CD14-positive monocyte (primary cell): ENCODE measurements at regions of chr15 and their contacts with region 1.

Region 1: DNA sequence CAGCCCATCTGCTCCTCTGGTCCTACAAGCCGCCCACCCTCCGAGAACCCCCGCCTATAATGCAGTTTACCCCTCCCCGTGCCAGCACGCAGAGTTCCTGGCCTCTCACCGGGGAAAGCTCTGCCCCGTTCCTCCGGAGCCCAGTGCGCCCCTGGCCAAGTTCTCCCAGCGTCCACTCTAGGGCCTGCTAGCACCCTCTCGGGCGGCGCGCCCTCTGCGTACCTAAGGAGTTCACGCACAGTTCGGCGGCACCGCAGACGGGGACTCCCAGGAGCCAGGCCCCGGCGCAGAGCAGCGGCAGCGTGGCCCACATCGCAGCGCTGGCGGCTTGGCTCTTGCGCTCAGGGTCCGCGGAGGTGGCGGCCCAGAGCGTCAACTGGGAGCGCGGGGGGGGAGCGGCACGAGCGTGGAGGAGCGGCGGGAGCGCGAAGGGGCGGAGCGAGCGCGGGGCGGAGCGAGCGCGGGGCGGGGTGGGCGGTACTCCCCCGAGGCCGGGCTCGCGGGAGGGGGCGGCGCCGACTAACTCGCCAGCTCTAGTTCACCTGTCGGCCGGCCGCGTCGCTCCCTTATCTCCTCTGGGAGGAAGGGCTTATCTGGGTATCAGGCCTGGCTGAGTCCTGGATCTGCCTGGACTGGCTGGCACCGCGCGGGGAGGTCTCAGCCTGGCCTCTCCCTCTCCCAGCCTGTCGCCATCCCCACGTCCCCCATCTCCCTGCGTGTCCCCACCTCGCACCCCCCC is at the start of gene CTSH:
- DNase-seq: peak; percentile 47 to 61 (median 54)
- H3K4me3 ChIP-seq: peak within 1 kb of the TSS; percentile 53 to 98 (median 95)
- H3K4me3 Mint-ChIP-seq: peak within 1 kb of the TSS; percentile 91 to 99
- H3K27ac ChIP-seq: peak within 1 kb of the TSS; percentile 76 to 94
- H3K27ac Mint-ChIP-seq: peak within 1 kb of the TSS; percentile 86 to 95 (median 90)
- H3K4me1 ChIP-seq: peaks cover 45 to 46% of the 10 kb centered on the region in 2 donors
- H3K4me1 Mint-ChIP-seq: peaks cover 45% of the 10 kb centered on the region
- H3K27me3 ChIP-seq: no peaks in the 10 kb centered on the region
- H3K27me3 Mint-ChIP-seq: peaks cover 6 to 13% (median 10%) of the 10 kb centered on the region in 3 donors
- CTCF ChIP-seq: no peak
- polyA plus RNA-seq, gene CTSH: 555 to 884 (median 756) TPM

Region 2: GRCh38 chr15:78788016-78788660 is 156.7 kb before region 1 on chr15:
- intact Hi-C with region 1: no loop called
- DNase-seq: no peak
- H3K4me3 ChIP-seq: no peak overlapping the region
- H3K4me3 Mint-ChIP-seq: no peak overlapping the region
- H3K27ac ChIP-seq: no peak overlapping the region
- H3K27ac Mint-ChIP-seq: no peak overlapping the region
- H3K4me1 ChIP-seq: no peaks in the 10 kb centered on the region
- H3K4me1 Mint-ChIP-seq: peaks cover 7% of the 10 kb centered on the region
- H3K27me3 ChIP-seq: no peaks in the 10 kb centered on the region
- H3K27me3 Mint-ChIP-seq: peaks cover 0 to 26% (median 7%) of the 10 kb centered on the region in 3 donors
- CTCF ChIP-seq: no peak

Region 3: GRCh38 chr15:78872972-78873792 is 71.7 kb before region 1 on chr15:
- intact Hi-C with region 1: loop called in 1 of 2 experiments (anchors 10 kb)
- DNase-seq: peak; percentile 76 to 87 (median 82)
- H3K4me3 ChIP-seq: peak overlapping the region; percentile 95 to 100 (median 96)
- H3K4me3 Mint-ChIP-seq: peak overlapping the region; percentile 97 to 98
- H3K27ac ChIP-seq: peak overlapping the region; percentile 98 to 100
- H3K27ac Mint-ChIP-seq: peak overlapping the region; percentile 100
- H3K4me1 ChIP-seq: peaks cover 42 to 43% of the 10 kb centered on the region in 2 donors
- H3K4me1 Mint-ChIP-seq: peaks cover 35% of the 10 kb centered on the region
- H3K27me3 ChIP-seq: no peaks in the 10 kb centered on the region
- H3K27me3 Mint-ChIP-seq: peaks cover 1 to 2% (median 2%) of the 10 kb centered on the region in 3 donors
- CTCF ChIP-seq: no peak

Region 4: GRCh38 chr15:78979456-78980320 is 34.9 kb after region 1 on chr15:
- intact Hi-C with region 1: loop called in 1 of 2 experiments (anchors 5 kb)
- DNase-seq: peak; percentile 30 to 53 (median 46)
- H3K4me3 ChIP-seq: no peak overlapping the region
- H3K4me3 Mint-ChIP-seq: no peak overlapping the region
- H3K27ac ChIP-seq: no peak overlapping the region
- H3K27ac Mint-ChIP-seq: peak overlapping the region in 4 of 7 donors; percentile 10 to 57 (median 30)
- H3K4me1 ChIP-seq: peaks cover 55% of the 10 kb centered on the region in 2 donors
- H3K4me1 Mint-ChIP-seq: peaks cover 63% of the 10 kb centered on the region
- H3K27me3 ChIP-seq: no peaks in the 10 kb centered on the region
- H3K27me3 Mint-ChIP-seq: peaks cover 0 to 5% (median 1%) of the 10 kb centered on the region in 3 donors
- CTCF ChIP-seq: peak; percentile 77